Thyroid gland (tissue), 4 donors: ENCODE measurements at regions of chr12 and their contacts with region 1.

Region 1: DNA sequence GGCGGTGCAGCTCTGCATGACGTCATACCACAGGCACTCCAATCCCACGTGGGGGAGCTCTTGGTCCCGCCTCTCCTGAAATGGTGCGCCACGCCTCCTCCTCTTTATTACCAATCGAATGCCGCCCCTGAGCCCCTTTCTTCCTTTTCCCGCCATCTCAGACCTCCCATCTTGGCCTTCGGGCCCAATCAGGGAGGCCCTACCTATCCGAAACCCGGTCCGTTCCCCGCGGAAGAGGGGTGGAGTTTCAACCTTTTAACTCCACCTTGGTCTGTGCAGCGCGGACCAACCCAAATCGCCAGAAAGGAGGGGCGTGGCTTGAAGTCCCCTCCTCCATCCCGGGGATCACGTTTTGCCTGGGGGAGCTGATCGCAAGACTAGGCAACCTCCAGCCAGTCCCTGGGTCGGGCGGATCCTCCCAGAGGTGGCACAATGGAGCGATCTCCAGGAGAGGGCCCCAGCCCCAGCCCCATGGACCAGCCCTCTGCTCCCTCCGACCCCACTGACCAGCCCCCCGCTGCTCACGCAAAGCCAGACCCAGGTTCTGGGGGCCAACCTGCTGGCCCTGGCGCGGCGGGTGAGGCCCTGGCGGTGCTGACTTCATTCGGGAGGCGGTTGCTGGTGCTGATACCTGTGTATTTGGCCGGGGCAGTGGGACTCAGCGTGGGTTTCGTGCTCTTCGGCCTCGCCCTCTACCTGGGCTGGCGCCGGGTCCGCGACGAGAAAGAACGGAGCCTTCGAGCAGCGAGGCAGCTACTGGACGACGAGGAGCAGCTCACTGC is at the start of gene ESYT1:
- DNase-seq: peak; percentile 100
- H3K4me3 ChIP-seq: peak within 1 kb of the TSS; percentile 45 to 73 (median 60)
- H3K27ac ChIP-seq: peak within 1 kb of the TSS; percentile 71 to 85 (median 84)
- H3K4me1 ChIP-seq: peaks cover 39 to 46% of the 10 kb centered on the region in 2 donors
- H3K27me3 ChIP-seq: no peaks in the 10 kb centered on the region
- CTCF ChIP-seq: no peak
- POLR2A ChIP-seq: peak; percentile 88 to 98
- total RNA-seq, gene ESYT1: 60.6 to 84.7 (median 68.7) TPM

Region 2: DNA sequence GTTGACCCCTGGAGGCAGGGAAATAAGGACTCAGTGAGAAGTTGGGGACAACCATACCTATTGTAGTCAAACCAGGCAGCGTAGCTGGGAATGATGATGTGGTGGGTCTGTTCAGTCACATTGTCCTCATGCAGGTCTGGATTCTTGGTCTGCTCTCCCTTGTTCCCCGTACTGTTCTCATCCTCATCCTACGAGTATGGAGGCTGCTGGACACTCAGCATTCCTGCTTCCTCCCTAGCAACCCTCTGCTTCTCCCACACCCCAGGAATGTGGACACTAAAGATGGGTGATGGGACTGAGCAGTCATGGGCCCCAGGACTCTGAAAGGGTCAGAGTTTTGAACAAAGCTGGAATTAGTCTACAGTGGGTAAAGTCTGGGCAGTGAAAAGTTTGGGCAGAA is 50.3 kb after region 1 on chr12:
- intact Hi-C with region 1: no loop called
- DNase-seq: no peak
- H3K4me3 ChIP-seq: no peak overlapping the region
- H3K27ac ChIP-seq: no peak overlapping the region
- H3K4me1 ChIP-seq: no peaks in the 10 kb centered on the region
- H3K27me3 ChIP-seq: no peaks in the 10 kb centered on the region
- CTCF ChIP-seq: no peak
- POLR2A ChIP-seq: no peak

Region 3: DNA sequence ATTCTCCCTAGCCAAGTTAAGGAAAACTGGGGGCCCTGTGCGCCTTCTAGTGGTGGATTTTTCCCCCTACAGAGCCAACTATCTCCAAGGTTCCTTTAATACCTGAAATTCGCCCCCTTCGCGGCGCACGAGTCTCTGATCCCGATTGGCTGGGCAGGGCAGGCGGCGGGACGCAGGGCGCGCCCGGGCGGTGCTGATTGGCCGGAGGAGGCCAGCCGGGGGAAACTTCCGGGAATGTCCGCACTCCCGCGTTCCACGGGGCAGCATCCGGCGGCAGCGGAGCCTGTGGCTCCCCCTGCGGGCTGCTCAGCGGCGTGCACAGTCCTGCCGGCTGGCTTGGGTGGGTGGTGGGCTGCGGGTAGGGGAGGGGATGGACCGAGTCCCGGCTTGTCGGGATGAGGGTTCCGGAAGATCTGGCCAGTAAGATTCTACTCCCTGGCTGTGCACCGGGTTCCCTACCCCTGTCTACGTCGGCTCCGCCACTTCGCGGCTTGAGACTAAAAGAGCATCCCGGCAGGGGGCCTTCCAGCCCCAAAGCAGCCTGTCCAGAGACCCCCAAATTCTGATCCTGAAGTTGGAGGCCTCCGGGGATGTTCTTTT is 96.1 kb after region 1 on chr12 and contains the start of gene NABP2:
- intact Hi-C with region 1: loop called (anchors 10 kb)
- DNase-seq: peak; percentile 99
- H3K4me3 ChIP-seq: peak within 1 kb of the TSS; percentile 6 to 64 (median 57)
- H3K27ac ChIP-seq: peak within 1 kb of the TSS; percentile 39 to 69 (median 66)
- H3K4me1 ChIP-seq: peaks cover 27 to 36% of the 10 kb centered on the region in 2 donors
- H3K27me3 ChIP-seq: no peaks in the 10 kb centered on the region
- CTCF ChIP-seq: peak; percentile 87 to 97 (median 88)
- POLR2A ChIP-seq: peak in 1 of 2 donors; percentile 56
- total RNA-seq, gene NABP2: 19.4 to 35.7 (median 31.4) TPM